Mammary epithelial cell (primary cell): ENCODE measurements at regions of chr1 and their contacts with region 1.

Region 1: DNA sequence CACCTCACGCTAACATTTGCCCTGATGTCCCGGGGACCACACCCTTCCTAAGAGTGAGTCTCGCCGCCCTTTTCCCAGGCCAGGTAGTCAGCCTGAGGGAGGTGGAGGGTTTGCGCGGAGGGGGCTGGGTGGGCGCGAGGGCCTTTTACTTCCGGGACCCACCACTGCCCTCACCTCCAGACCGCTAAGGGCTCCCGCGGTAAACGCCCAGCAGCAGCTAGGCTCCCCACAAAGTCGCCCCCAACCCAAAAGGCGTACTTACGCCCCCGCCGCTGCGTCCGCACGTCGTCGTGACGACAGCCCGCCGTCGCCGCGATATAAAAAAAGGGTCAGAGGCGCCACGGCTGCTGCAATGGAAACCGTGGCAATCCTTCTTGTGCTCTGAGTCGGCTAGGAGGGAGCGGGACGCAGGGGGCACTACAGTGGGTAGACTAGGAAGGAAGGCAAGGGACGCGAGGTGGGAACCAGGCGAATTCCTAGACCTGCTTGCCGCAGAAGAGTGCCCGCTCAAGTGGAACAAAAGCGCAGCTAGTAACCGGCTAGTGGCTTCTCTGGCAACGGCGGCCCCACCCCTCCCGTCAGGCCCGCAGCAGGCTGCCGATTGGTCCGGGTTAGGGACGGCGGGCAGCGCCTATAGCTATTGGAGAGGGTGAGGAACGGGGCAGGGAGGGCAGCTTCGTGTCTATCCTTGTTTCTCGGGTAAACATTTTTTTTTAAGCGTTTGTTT is at the start of gene ODF2L:
- DNase-seq: peak; percentile 85
- H3K4me3 ChIP-seq: peak within 1 kb of the TSS; percentile 51 to 67 (median 59)
- H3K27ac ChIP-seq: peak within 1 kb of the TSS; percentile 53
- H3K4me1 ChIP-seq: peaks cover 6% of the 10 kb centered on the region
- H3K27me3 ChIP-seq: no peaks in the 10 kb centered on the region
- CTCF ChIP-seq: no peak
- total RNA-seq, gene ODF2L: 43.0 to 55.2 TPM

Region 2: GRCh38 chr1:86370601-86371022 is 25.3 kb before region 1 on chr1:
- CTCF ChIA-PET with region 1: no interaction called
- dilution Hi-C with region 1: no loop called
- in situ Hi-C with region 1: no loop called
- intact Hi-C with region 1: no loop called
- DNase-seq: peak; percentile 9
- H3K4me3 ChIP-seq: no peak overlapping the region
- H3K27ac ChIP-seq: no peak overlapping the region
- H3K4me1 ChIP-seq: no peaks in the 10 kb centered on the region
- H3K27me3 ChIP-seq: no peaks in the 10 kb centered on the region
- CTCF ChIP-seq: no peak

Region 3: DNA sequence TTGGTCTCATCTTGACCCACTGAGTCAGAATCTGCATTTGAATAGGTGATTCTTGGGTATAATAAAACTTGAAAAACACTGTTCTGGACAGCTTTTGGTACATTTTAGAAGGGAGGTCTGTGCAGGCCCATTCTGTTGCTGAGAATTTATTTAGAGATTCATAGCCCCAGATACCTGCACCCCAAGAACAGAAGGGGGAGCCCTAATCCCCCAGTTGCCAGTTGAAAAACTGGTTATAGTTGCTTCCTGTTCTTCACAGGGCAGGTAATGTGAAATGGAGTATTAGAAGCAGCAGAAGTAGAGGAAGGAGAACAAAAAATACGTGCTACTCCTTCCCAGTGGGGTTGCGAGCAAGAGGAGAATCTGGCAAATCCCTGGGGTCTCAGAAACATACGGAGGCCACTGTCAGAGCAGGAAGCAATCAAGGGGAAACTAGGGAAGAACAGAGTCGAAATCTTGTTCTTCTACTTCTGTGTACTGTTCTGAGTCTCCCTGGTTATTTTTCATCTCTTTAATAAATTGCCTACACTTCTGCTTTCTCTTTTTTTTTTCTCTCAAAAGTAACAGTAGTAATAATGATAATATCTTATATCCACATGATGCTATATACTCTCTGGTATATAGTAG is 23.5 kb after region 1 on chr1:
- CTCF ChIA-PET with region 1: no interaction called
- dilution Hi-C with region 1: no loop called
- in situ Hi-C with region 1: no loop called
- intact Hi-C with region 1: loop called (anchors 1 kb)
- DNase-seq: peak; percentile 52
- H3K4me3 ChIP-seq: no peak overlapping the region
- H3K27ac ChIP-seq: no peak overlapping the region
- H3K4me1 ChIP-seq: peaks cover 37% of the 10 kb centered on the region
- H3K27me3 ChIP-seq: no peaks in the 10 kb centered on the region
- CTCF ChIP-seq: peak; percentile 76 to 87

Region 4: DNA sequence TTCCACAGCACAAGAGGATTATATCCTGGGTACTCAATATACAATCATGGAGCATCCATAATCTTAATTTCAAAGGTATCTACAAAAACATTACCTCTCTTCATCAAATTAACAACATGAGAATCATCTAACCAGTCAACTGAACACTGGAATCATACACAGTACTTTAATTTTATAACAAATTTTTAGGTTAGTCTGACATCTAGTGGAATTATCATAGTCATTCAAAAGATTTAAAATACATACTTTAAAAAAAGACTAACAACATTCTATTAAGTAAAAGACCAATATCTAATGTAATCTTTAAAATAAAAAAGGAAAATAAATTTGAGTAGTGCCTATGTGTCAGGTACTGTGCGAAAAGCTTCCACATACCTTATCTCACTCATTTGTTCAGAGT is 291.7 kb after region 1 on chr1:
- CTCF ChIA-PET with region 1: no interaction called
- dilution Hi-C with region 1: no loop called
- in situ Hi-C with region 1: loop called in 1 of 2 experiments (anchors 25 kb)
- intact Hi-C with region 1: no loop called
- DNase-seq: no peak
- H3K4me3 ChIP-seq: no peak overlapping the region
- H3K27ac ChIP-seq: no peak overlapping the region
- H3K4me1 ChIP-seq: no peaks in the 10 kb centered on the region
- H3K27me3 ChIP-seq: no peaks in the 10 kb centered on the region
- CTCF ChIP-seq: peak; percentile 7 to 17